Left cardiac atrium (tissue), 4 donors: ENCODE measurements at regions of chr7 and their contacts with region 1.

Region 1: DNA sequence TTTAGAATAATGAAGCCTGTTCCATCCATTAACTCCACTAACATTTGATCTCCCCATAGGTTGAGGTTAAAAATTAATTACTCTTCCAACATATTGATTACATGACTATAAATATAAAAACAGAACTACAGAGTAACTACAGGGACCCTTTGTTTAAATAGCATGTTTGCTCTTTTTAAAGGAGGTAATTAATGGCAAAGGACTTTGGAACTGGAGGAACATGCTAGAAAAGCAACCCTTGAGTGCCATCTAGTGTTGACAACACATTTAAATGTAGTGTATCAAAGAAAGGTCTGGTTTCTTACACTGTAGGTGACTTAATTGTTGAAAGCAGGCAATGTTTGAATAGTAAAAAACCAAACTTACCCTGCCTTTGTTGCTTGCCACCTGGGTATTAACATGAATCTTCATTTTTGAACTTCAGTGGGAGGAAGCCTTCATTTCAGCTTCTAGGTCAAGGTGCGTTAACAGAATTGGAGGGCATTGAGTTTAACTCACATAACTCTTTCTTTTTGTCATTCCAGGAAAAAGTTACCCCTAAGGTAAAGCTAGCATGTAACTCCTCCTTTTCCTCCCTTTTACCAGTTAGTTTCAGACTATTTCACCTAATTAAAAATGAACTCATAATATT is 52.6 kb upstream of the CAPZA2 start:
- DNase-seq: no peak
- ATAC-seq: peak; percentile 75 to 77

Region 2: DNA sequence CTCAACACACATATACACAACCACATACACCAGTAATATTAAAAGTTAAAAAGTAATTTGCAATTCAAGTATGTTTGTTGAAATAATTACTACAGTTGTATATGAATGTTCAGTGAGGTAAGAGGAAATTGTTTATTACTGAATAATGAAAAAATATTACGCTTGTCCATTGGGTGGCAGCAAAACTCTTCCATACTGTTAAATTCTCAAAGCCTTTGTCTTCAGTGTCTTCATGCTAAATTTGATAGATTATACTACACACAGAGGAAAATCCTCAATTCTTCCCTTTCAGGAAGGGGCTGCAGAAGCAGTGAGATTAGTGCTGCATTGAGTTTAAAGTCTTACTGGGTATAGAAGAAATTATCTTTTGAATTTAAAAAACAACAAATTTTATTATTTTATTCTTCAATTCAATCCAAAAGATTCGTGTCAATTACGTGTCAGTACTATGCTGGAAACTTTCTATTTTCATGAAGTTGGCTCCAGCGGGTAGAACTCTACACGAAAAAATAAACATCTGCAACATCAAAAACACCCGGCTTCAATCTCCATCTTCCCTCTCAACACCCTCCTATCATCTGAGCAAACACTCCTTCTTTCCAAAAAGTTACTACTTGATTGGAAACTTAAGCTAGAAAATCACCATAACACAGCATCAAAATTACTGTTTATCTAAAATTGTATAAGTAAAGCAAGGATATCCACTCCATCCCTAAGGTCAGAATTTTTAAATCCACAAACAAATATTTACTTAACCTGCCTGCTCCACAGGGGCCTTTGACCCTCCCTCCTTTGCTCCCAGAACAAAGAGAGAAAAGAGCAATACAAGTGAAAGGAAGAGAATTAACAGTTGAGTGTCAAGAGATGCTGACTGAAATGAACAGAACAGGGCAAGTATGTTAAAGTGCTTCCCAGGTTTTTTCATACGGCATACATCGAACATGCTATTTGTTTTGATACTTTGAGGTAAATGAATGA is 636.4 kb before region 1 on chr7:
- intact Hi-C with region 1: loop called (anchors 5 to 10 kb)
- DNase-seq: no peak
- ATAC-seq: peak in 1 of 2 donors; percentile 38

Region 3: DNA sequence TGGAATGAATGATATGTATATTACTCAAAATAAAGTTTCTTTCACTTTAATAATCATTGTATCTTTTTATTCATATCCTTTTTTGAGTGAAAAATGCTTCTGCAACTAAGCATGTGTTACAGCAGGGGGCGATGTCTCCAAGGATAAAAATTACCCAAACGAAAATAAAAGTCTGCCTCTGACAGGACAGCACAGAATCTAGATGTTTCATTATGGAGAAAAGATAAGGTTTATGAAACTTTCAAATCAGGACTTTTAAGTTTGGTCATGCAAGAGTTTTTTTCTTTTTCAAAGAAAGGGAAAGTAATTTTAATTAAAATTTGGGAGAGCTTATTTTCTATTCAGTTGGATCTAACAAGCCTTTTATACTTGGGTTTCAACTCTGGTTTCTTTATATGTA is 551.0 kb before region 1 on chr7:
- intact Hi-C with region 1: loop called (anchors 5 to 10 kb)
- DNase-seq: no peak
- ATAC-seq: peak; percentile 66 to 68

Region 4: DNA sequence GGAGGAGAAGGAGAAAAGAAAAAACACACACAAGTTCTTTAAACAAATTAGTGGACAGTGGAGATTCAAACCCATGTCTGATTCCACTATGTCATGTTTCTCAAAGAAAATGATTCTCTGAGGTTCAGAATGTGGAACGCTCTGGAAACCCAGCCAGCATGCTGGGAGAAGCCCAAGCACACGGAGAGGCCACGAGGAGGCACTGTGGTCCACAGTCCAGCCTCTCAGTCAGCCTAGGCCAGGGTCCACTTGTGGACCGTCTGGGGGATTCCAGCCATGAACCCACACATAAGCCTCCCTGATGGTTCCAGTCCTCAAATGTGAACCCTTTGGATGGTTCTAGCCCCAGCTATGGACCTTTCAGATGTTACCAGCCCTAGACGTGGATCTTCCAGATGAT is 211.5 kb before region 1 on chr7:
- intact Hi-C with region 1: loop called (anchors 2 to 5 kb)
- DNase-seq: no peak
- ATAC-seq: peak in 1 of 2 donors; percentile 38

Region 5: DNA sequence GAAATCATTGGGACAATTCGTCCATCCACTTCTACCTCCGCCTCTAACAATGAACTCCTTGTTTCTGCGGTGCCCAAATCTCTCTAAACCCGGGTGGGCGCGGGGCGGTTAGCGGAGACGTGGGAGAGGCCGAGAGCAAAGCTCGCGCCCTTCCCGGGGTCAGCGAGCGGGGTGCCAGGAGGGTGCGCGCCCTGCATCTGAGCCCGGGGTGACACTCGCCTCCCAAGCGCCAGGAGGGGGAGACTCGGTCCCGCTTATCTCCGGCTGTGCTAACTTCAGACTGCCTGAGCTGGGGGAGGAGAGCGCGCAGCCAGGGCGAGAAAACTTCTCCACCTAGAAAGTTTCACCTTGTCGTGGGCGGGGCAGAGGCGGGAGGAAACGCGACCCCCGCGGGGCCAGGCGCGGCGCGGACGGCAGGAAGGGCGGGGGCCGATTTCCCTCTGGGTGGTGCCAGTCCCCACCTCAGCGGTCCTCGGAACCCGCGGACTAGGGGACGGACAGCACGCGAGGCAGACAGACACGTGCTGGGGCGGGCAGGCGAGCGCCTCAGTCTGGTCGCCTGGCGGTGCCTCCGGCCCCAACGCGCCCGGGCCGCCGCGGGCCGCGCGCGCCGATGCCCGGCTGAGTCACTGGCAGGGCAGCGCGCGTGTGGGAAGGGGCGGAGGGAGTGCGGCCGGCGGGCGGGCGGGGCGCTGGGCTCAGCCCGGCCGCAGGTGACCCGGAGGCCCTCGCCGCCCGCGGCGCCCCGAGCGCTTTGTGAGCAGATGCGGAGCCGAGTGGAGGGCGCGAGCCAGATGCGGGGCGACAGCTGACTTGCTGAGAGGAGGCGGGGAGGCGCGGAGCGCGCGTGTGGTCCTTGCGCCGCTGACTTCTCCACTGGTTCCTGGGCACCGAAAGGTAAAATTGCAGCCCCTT is 137.8 kb before region 1 on chr7 and contains the start of gene MET:
- intact Hi-C with region 1: loop called (anchors 5 to 10 kb)
- DNase-seq: peak; percentile 79
- ATAC-seq: peak; percentile 92 to 97
- total RNA-seq, gene MET: 15.7 to 16.7 TPM